Activated B cell treated with CpG ODN at 0.5 μM for 24 hours (primary cell): ENCODE measurements at regions of chr19 and their contacts with region 1.

Region 1: GRCh38 chr19:57599761-57600383 is at the start of gene ZNF530:
- DNase-seq: peak; percentile 77
- ATAC-seq: peak; percentile 98
- H3K4me3 Mint-ChIP-seq: peak within 1 kb of the TSS; percentile 90
- H3K27ac Mint-ChIP-seq: peak within 1 kb of the TSS; percentile 84
- H3K4me1 Mint-ChIP-seq: peaks cover 19% of the 10 kb centered on the region
- H3K27me3 Mint-ChIP-seq: peaks cover 4% of the 10 kb centered on the region
- CTCF ChIP-seq: no peak
- total RNA-seq, gene ZNF530: 7.0 and 7.9 TPM in 2 replicates

Region 2: GRCh38 chr19:57559404-57560025 is 40.4 kb before region 1 on chr19 and contains the start of gene ZNF550:
- CTCF ChIA-PET with region 1: no interaction called
- POLR2A ChIA-PET with region 1: no interaction called
- intact Hi-C with region 1: loop called (anchors 1 kb)
- DNase-seq: peak; percentile 83
- ATAC-seq: peak; percentile 98
- H3K4me3 Mint-ChIP-seq: peak within 1 kb of the TSS; percentile 92
- H3K27ac Mint-ChIP-seq: peak within 1 kb of the TSS; percentile 69
- H3K4me1 Mint-ChIP-seq: peaks cover 33% of the 10 kb centered on the region
- H3K27me3 Mint-ChIP-seq: no peaks in the 10 kb centered on the region
- CTCF ChIP-seq: no peak
- total RNA-seq, gene ZNF550: 16.8 and 18.7 TPM in 2 replicates

Region 3: GRCh38 chr19:57583521-57584416 is 16.1 kb before region 1 on chr19 and contains the start of gene ZIK1:
- CTCF ChIA-PET with region 1: no interaction called
- POLR2A ChIA-PET with region 1: no interaction called
- intact Hi-C with region 1: loop called (anchors 1 kb)
- DNase-seq: peak; percentile 75
- ATAC-seq: peak; percentile 88
- H3K4me3 Mint-ChIP-seq: peak within 1 kb of the TSS; percentile 91
- H3K27ac Mint-ChIP-seq: peak within 1 kb of the TSS; percentile 87
- H3K4me1 Mint-ChIP-seq: peaks cover 27% of the 10 kb centered on the region
- H3K27me3 Mint-ChIP-seq: no peaks in the 10 kb centered on the region
- CTCF ChIP-seq: no peak
- total RNA-seq, gene ZIK1: 16.2 and 18.1 TPM in 2 replicates

Region 4: DNA sequence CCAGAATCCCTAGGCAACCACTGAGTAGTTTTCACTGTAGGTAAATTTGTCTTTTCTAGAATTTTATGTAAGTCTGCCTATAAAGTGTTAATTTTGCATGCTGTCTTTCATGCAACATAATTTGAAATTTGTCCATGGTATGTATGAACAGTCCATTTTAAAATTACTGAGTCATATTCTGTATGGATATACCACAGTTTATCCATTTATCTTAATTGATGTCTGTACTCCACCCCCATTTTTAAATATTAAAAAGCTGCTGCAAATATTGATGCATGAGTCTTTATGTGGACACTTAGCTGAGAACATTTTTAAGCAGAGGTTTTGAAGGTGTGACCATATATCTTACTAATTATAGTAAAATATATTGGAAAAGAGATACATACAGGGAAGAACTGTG is 23.2 kb after region 1 on chr19:
- CTCF ChIA-PET with region 1: no interaction called
- POLR2A ChIA-PET with region 1: no interaction called
- intact Hi-C with region 1: no loop called
- DNase-seq: no peak
- ATAC-seq: no peak
- H3K4me3 Mint-ChIP-seq: no peak overlapping the region
- H3K27ac Mint-ChIP-seq: no peak overlapping the region
- H3K4me1 Mint-ChIP-seq: peaks cover 8% of the 10 kb centered on the region
- H3K27me3 Mint-ChIP-seq: no peaks in the 10 kb centered on the region
- CTCF ChIP-seq: no peak

Region 5: DNA sequence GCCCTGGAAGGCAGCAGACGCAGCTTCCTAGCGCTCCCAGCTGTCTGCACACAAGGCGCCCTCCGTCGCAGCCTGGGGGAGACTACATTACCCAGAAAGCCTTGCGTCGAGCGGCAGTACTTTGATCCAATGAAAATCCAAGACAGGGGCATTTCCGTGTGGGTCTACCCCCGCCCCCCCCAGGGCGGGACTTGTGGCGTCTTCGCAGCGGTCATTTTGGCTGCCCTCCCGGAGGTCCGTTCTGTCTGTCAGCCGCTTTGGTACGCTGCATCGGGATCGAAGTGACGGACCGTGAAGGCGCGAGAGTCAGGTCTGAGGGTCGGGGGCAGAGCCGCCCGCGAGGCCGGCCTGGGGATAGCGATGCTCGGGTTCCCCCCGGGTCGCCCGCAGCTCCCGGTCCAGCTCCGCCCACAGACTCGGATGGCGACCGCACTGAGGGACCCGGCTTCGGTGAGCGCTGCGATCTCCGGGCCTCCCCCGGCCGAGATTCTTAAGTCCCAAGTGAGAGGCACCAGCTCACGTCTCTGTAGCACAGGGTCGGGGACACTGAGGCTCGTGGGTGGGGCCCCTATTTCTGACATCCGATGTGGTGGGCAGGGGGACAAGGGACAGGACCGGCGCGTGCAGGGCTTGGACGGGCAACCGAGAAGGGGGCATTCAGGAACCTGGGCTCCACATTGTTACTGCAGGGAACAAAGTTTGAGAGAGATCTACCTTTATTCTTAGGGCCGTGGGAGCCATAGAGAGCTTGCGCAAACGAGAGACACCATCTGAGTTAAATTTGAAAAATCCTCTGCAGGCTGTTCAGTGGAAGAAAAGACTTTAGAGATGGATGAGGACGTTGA is 33.3 kb after region 1 on chr19 and contains the start of gene ZNF211:
- CTCF ChIA-PET with region 1: no interaction called
- POLR2A ChIA-PET with region 1: no interaction called
- intact Hi-C with region 1: loop called (anchors 1 kb)
- DNase-seq: peak; percentile 81
- ATAC-seq: peak; percentile 100
- H3K4me3 Mint-ChIP-seq: peak within 1 kb of the TSS; percentile 94
- H3K27ac Mint-ChIP-seq: peak within 1 kb of the TSS; percentile 87
- H3K4me1 Mint-ChIP-seq: peaks cover 19% of the 10 kb centered on the region
- H3K27me3 Mint-ChIP-seq: no peaks in the 10 kb centered on the region
- CTCF ChIP-seq: no peak
- total RNA-seq, gene ZNF211: 22.0 and 26.0 TPM in 2 replicates